SK-N-SH (cell line): ENCODE measurements at regions of chr2 and their contacts with region 1.

Region 1: DNA sequence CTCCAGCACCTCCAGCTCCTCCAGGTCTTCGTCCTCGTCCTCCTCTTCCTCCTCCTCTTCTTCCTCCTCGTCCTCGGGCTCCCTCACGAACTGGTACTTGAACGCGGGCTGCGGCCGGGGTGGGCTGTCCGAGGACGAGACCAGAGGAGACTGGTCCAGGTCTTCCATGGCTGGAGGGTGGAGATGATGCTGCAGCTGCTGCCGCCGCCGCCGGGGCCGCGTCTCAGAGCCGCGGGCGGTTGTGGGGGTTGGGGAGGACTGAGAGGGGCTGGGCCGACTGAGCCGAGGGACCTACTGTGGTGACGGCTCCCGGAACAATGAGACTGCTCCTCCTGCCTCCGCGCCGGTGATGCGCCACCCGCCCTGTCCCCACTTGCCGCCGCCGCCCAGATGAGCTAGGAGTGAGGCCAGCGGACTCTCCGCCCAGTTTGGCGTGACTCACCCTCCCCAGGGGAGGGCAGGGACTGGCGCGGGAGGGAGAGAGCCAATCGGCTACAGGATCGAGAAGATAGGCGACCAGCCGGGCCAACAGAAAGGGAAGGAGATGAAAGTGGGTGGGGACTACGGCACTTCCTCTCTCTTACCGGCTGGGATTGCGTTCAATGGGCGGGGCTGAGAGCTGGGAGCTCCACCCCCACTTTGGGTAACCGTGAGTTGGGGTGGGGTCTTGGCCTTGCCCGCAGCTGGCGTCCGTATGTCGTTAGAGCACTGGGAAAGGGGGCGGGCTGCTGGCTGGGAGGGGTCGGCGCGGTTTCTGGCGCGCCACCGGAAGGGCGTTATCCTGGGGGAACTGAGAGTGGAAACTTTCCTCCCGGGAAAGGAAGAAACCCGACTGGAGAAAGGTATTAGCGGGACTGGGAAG is at the start of gene RTN4:
- DNase-seq: peak; percentile 96
- H3K4me3 ChIP-seq: peak within 1 kb of the TSS; percentile 95 to 99
- H3K27ac ChIP-seq: peak within 1 kb of the TSS; percentile 98 to 100
- H3K4me1 ChIP-seq: peaks cover 1 to 13% of the 10 kb centered on the region in 2 experiments; a peak in 3 of 4 replicates
- H3K27me3 ChIP-seq: no peaks in the 10 kb centered on the region
- CTCF ChIP-seq: 0 out of 2 replicates have a peak, but pooled peaks have one; percentile 14
- EP300 ChIP-seq: peak in 1 of 2 experiments; percentile 59; a peak in 1 of 4 replicates
- RAD21 ChIP-seq: no peak
- polyA plus RNA-seq, gene RTN4: 225 and 315 TPM in 2 replicates

Region 2: DNA sequence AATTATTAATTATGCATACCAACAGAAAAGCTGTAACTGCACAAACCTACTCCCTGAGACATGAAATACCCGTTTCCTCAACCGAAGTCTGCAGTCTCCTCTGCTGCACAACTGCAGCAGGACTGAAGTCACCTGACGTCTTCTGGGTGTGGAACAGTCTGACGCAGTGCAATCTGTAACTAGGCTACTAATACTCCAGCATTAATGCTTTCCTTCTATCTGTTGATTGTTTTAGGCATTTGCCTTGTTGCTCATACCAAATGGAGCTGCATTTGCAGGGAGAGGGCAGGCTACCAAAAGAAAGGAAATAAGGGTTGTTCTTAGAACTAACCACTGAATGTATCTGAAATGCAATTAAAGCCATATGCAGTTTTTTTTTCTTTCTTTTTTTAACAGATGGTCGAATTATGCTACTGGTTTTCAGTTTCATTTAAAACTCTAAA is 40.2 kb before region 1 on chr2:
- CTCF ChIA-PET with region 1: interaction called, 17 read pairs
- POLR2A ChIA-PET with region 1: interaction called, 4 read pairs
- DNase-seq: no peak
- H3K4me3 ChIP-seq: peak overlapping the region in 1 of 2 experiments; percentile 1; a peak in 1 of 4 replicates
- H3K27ac ChIP-seq: peak overlapping the region in 1 of 2 experiments; percentile 43; a peak in 2 of 4 replicates
- H3K4me1 ChIP-seq: peaks cover 28 to 83% of the 10 kb centered on the region in 2 experiments; a peak in 3 of 4 replicates
- H3K27me3 ChIP-seq: no peaks in the 10 kb centered on the region
- CTCF ChIP-seq: no peak
- EP300 ChIP-seq: no peak
- RAD21 ChIP-seq: no peak

Region 3: GRCh38 chr2:55033066-55033742 is 17.2 kb before region 1 on chr2:
- CTCF ChIA-PET with region 1: interaction called, 34 read pairs
- POLR2A ChIA-PET with region 1: no interaction called
- DNase-seq: no peak
- H3K4me3 ChIP-seq: no peak overlapping the region
- H3K27ac ChIP-seq: no peak overlapping the region
- H3K4me1 ChIP-seq: peaks cover 5 to 9% of the 10 kb centered on the region in 2 experiments; a peak in 3 of 4 replicates
- H3K27me3 ChIP-seq: no peaks in the 10 kb centered on the region
- CTCF ChIP-seq: no peak
- EP300 ChIP-seq: no peak
- RAD21 ChIP-seq: no peak

Region 4: GRCh38 chr2:55120634-55121359 is 70.4 kb after region 1 on chr2:
- CTCF ChIA-PET with region 1: interaction called, 12 read pairs
- POLR2A ChIA-PET with region 1: no interaction called
- DNase-seq: no peak
- H3K4me3 ChIP-seq: no peak overlapping the region; a peak in 1 of 4 replicates
- H3K27ac ChIP-seq: peak overlapping the region in 1 of 2 experiments; percentile 23; a peak in 1 of 4 replicates
- H3K4me1 ChIP-seq: peaks cover 22 to 36% of the 10 kb centered on the region in 2 experiments; a peak in 3 of 4 replicates
- H3K27me3 ChIP-seq: no peaks in the 10 kb centered on the region
- CTCF ChIP-seq: no peak
- EP300 ChIP-seq: no peak
- RAD21 ChIP-seq: no peak

Region 5: DNA sequence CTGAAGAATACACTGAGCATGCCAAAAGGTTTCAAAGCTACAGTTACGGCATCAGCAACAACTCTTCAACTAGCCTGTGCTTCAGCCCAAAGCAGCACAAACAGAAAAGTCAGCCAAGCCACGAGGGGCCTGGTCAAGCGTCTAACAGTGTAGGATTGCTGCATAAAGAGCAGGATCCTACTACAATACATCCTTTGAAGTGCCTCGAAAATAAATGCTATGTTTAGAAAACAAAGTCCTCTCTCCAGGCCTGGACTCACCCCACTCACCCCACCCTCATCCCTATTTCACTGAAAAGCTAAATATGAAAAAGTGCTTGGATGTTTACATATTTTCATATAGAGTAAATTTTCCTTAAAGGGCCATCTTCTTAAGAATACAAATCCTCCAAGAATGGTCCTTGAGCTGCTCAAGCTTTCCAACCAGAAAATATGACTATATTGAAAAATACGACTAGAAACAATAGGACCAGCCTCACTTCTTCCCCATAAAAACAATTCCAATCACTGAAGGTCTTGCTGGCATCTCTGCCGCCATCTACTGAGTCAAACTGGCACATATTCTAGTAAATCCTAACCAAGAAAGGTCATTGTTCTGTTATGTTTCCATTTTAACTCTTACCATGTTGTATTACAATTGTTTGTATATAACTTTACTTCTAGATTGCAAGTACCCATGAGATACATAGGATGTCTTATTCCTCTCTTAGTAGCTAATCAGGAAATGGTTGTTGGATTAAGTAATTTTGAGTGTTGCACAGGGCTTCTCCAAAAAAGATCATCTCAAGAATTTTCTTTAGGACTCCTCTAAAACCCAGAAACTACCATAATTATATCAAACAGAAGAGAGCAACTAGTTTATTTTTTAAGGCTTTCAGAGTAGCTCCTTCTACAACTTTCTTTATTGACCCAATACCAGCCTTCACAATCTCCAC is 118.1 kb after region 1 on chr2:
- CTCF ChIA-PET with region 1: interaction called, 60 read pairs
- POLR2A ChIA-PET with region 1: interaction called, 8 read pairs
- DNase-seq: peak; percentile 52
- H3K4me3 ChIP-seq: peak overlapping the region in 1 of 2 experiments; percentile 6; a peak in 1 of 4 replicates
- H3K27ac ChIP-seq: peak overlapping the region; percentile 64 to 76
- H3K4me1 ChIP-seq: peaks cover 15 to 36% of the 10 kb centered on the region in 2 experiments
- H3K27me3 ChIP-seq: no peaks in the 10 kb centered on the region
- CTCF ChIP-seq: peak; percentile 90
- EP300 ChIP-seq: peak in 1 of 2 experiments; percentile 32; a peak in 1 of 4 replicates
- RAD21 ChIP-seq: peak; percentile 96